AG04450 (cell line): ENCODE measurements at regions of chr4 and their contacts with region 1.

Region 1: DNA sequence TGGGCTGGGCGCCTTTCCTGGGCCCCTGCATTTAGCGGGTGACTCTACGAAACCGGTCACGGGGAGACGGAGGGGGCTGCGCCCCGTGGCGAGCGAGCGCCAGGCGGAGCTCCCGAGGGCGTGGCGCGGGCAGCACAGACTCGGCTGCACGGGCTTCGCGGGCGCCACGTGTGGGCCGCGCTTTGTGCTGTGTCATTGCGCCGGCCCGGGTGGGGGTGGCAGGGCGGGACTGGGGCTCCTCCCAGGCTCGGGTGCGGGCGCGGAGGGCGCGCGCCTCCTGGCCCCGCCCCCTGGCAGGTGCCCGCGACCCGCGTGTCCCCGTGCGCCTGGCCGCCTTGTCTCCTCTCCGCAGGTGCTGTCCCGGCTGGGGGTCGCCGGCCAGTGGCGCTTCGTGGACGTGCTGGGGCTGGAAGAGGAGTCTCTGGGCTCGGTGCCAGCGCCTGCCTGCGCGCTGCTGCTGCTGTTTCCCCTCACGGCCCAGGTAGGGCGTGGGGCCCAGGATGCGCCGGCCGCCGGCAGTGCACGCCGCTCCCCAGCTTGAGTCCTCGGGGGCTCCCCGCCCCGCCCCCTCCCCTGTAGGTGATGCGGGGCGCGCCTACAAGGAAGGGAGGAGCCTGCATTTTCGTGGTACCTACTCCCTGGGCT is 651 bp downstream of the UCHL1 start:
- DNase-seq: no peak
- H3K4me3 ChIP-seq: peak overlapping the region; percentile 90
- H3K27ac ChIP-seq: peak overlapping the region; percentile 75
- H3K27me3 ChIP-seq: peaks cover 5% of the 10 kb centered on the region
- CTCF ChIP-seq: no peak

Region 2: GRCh38 chr4:40897557-40898203 is 359.7 kb before region 1 on chr4:
- CTCF ChIA-PET with region 1: interaction called, 15 read pairs
- POLR2A ChIA-PET with region 1: interaction called, 3 read pairs
- DNase-seq: no peak
- H3K4me3 ChIP-seq: no peak overlapping the region
- H3K27ac ChIP-seq: no peak overlapping the region
- H3K27me3 ChIP-seq: no peaks in the 10 kb centered on the region
- CTCF ChIP-seq: peak; percentile 76

Region 3: DNA sequence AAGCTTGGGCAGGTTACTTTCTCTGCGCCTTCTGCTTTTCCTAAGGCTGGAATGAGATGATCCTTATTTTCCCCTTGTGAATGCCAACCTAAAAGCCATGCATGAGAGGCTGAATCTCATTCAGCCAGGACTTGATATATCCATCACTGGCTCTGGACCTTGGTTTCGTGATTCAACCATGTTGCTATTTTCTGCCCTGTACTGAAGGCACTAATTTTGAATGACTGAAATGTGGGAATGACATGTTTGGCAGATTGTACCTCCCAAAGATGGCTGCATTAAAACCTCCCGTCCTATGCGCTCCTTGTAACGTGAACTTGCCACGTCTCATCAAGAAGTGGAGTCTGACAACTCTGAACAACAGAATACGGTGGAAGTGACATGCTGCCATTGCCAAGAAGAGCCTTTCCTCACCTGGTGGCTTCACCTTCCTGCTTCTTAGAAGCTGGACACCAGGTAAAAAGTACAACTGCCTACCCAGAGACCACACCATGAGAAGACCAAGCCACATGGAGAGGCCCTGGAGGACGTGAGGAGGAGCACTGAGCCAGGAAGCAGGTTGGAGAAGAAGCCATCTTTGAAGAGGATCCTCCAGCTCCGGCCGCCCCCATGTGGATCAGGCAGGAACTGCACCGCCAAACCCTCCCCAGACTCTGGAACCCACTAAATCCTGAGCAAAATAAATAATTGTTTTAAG is 333.1 kb before region 1 on chr4:
- CTCF ChIA-PET with region 1: interaction called, 38 read pairs
- POLR2A ChIA-PET with region 1: interaction called, 4 read pairs
- DNase-seq: no peak
- H3K4me3 ChIP-seq: no peak overlapping the region
- H3K27ac ChIP-seq: no peak overlapping the region
- H3K27me3 ChIP-seq: no peaks in the 10 kb centered on the region
- CTCF ChIP-seq: peak; percentile 97

Region 4: GRCh38 chr4:41177016-41177415 is 80.4 kb before region 1 on chr4:
- CTCF ChIA-PET with region 1: no interaction called
- POLR2A ChIA-PET with region 1: interaction called, 15 read pairs
- DNase-seq: no peak
- H3K4me3 ChIP-seq: no peak overlapping the region
- H3K27ac ChIP-seq: peak overlapping the region; percentile 82
- H3K27me3 ChIP-seq: no peaks in the 10 kb centered on the region
- CTCF ChIP-seq: peak; percentile 29; the same call in 1 of the 2 replicates

Region 5: GRCh38 chr4:41245983-41246382 is 11.4 kb before region 1 on chr4:
- CTCF ChIA-PET with region 1: interaction called, 5 read pairs
- POLR2A ChIA-PET with region 1: interaction called, 15 read pairs
- DNase-seq: no peak
- H3K4me3 ChIP-seq: no peak overlapping the region
- H3K27ac ChIP-seq: no peak overlapping the region
- H3K27me3 ChIP-seq: peaks cover 17% of the 10 kb centered on the region
- CTCF ChIP-seq: no peak

Region 6: GRCh38 chr4:41573502-41574001 is 316.2 kb after region 1 on chr4:
- CTCF ChIA-PET with region 1: no interaction called
- POLR2A ChIA-PET with region 1: no interaction called
- DNase-seq: no peak
- H3K4me3 ChIP-seq: no peak overlapping the region
- H3K27ac ChIP-seq: no peak overlapping the region
- H3K27me3 ChIP-seq: peaks cover 4% of the 10 kb centered on the region
- CTCF ChIP-seq: no peak

Region 7: GRCh38 chr4:41644288-41644914 is 387.0 kb after region 1 on chr4:
- CTCF ChIA-PET with region 1: interaction called, 12 read pairs
- POLR2A ChIA-PET with region 1: no interaction called
- DNase-seq: no peak
- H3K4me3 ChIP-seq: no peak overlapping the region
- H3K27ac ChIP-seq: no peak overlapping the region
- H3K27me3 ChIP-seq: peaks cover 17% of the 10 kb centered on the region
- CTCF ChIP-seq: peak; percentile 57